ENCODE measurements at regions of chr1 and their contacts with region 1.

Region 1: DNA sequence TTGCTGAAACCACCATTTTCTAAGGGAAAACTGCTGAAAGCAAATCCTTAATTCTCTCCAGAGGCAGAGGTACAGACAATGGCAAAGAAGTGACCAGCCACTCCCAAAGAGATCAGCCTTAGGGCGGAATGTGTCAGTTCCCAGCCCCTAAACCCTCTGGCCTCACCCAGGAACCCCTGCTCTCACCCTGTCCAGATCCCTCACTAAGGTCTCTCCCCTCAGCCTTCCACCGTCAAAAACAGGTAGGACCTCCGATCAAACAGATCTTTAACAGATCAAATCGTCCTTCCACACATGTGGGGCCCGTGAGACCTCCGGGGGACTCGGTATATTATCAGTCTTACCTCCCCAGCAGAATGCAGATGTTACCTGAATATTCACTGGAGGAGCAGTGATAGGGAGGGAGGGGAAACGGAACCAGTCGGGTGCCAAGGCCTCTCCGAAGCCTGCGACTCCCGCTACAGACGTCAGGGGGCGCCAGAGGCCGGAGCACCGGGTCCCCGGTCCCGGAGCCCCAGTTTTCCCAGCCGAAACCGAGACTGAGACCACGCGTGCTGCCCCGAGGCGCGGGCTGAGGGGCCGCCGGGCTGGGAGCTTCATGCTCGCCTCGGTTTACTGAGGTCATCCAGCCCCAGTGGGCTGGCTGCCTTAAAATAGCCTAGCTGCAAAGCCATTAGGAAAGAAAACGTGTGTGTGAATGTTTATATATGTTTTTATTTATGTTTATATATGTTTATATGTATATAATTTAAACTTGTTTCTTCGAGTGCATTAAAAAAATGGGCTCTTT is 23.6 kb downstream of the GPA33 start:
- DNase-seq: peak; percentile 51
- H3K4me3 ChIP-seq: peak overlapping the region; percentile 28 to 40 (median 35)
- H3K27ac ChIP-seq: no peak overlapping the region
- H3K4me1 ChIP-seq: no peaks in the 10 kb centered on the region
- H3K27me3 ChIP-seq: no peaks in the 10 kb centered on the region
- CTCF ChIP-seq: peak; percentile 61 to 96

Region 2: DNA sequence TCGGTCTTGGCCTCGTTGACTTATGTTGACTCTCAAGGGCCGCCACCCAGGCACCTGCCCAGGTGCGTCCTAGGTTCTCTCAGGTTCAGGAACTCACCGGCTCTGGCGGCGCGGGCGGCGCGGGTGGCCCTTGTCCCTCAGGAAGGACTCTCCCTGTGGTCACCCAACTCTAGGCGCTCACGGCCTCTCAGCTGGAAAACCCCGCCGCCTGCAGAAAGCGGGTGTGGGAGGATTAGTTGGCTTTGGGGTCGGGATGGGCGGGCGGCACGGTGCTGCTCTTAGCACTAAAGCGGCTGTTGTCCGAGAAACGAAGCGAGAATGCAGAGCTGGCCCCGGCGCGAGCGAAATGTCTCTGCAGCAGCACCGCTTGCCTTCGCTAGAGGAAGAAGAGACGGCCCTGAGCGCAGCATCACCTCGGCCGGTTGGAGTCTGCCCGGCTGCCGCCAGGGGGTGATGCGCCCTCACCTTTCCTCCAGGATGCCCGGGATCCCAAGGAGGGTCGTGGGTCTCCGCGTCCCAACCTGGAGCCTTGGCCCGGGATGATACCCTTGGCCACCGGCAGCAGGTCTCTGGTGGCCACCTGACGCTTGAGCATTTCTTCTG is 182.4 kb before region 1 on chr1:
- CTCF ChIA-PET with region 1: no interaction called
- dilution Hi-C with region 1: loop called (anchors 25 kb)
- in situ Hi-C with region 1: loop called in 1 of 2 experiments (anchors 10 kb)
- intact Hi-C with region 1: no loop called
- DNase-seq: peak; percentile 31
- H3K4me3 ChIP-seq: peak overlapping the region in 1 of 3 experiments; percentile 24
- H3K27ac ChIP-seq: no peak overlapping the region
- H3K4me1 ChIP-seq: peaks cover 5% of the 10 kb centered on the region
- H3K27me3 ChIP-seq: no peaks in the 10 kb centered on the region
- CTCF ChIP-seq: peak; percentile 69 to 87

Region 3: DNA sequence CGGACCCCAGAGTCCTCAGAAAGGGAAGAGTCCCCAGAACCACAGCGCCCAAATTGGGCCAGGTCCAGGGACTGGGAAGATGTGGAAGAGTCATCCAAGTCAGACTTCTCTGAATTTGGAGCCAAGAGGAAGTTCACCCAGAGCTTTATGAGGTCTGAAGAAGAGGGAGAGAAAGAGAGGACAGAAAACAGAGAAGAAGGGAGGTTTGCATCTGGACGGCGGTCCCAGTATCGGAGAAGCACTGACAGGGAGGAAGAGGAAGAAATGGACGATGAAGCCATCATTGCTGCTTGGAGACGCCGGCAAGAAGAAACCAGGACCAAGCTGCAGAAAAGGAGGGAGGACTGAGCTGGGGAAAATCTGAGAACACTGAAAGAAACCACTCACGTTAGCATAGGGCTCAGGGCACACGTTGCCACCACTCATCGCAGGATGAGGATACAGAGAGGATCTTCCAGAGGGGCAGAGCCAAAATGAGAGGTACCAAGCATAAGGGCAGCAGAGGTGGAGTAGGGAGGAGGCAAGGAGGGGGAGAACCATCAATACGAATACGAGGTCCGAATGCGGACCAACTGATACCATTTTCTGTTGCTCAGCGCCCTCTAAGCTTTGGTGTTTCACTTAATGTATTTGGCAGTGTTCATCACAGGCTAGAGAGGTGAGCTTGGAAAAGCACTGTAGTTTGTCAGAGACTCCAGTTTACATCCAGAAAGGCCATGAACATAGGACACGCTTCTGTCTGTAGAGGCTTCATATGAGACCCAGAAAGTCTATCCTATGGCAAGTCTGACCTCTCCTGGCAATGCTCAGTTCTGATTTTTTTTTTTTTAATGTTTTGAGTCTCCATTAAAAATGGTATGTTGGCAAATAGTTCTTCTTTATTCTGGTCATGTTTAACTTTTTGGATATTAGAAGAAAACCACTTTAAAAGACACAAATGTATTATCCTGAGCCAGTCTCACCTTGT is 62.0 kb after region 1 on chr1:
- CTCF ChIA-PET with region 1: no interaction called
- dilution Hi-C with region 1: no loop called
- in situ Hi-C with region 1: loop called in 1 of 2 experiments (anchors 10 kb)
- intact Hi-C with region 1: loop called (anchors 1 kb)
- DNase-seq: no peak
- H3K4me3 ChIP-seq: no peak overlapping the region
- H3K27ac ChIP-seq: no peak overlapping the region
- H3K4me1 ChIP-seq: no peaks in the 10 kb centered on the region
- H3K27me3 ChIP-seq: no peaks in the 10 kb centered on the region
- CTCF ChIP-seq: peak; percentile 19 to 40

Region 4: DNA sequence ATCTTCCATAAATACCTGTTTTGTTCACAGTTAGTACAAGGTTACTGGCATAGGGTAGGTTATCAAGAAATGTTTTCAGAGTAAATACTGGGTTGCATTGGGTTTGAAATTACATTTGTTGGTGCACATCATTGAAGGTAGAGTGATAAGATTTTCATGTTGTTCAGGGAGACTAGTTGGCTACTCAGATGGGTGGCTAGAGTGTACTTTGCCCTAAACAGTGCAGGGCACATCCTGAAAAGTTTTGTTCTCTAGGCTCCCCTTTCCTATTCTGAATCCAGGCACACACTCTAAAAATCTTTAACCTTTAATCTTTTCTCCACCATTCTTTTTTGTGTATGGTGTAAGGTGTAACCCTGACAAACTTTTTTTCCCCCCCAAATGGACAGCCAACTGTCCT is 172.2 kb after region 1 on chr1:
- CTCF ChIA-PET with region 1: no interaction called
- dilution Hi-C with region 1: no loop called
- in situ Hi-C with region 1: no loop called
- intact Hi-C with region 1: no loop called
- DNase-seq: no peak
- H3K4me3 ChIP-seq: no peak overlapping the region
- H3K27ac ChIP-seq: no peak overlapping the region
- H3K4me1 ChIP-seq: peaks cover 4% of the 10 kb centered on the region
- H3K27me3 ChIP-seq: no peaks in the 10 kb centered on the region
- CTCF ChIP-seq: no peak

Region 5: GRCh38 chr1:167328816-167329483 is 262.4 kb after region 1 on chr1:
- CTCF ChIA-PET with region 1: no interaction called
- dilution Hi-C with region 1: loop called (anchors 10 kb)
- in situ Hi-C with region 1: no loop called
- intact Hi-C with region 1: no loop called
- DNase-seq: no peak
- H3K4me3 ChIP-seq: no peak overlapping the region
- H3K27ac ChIP-seq: no peak overlapping the region
- H3K4me1 ChIP-seq: no peaks in the 10 kb centered on the region
- H3K27me3 ChIP-seq: no peaks in the 10 kb centered on the region
- CTCF ChIP-seq: no peak

Region 6: GRCh38 chr1:167401260-167401873 is 334.8 kb after region 1 on chr1:
- CTCF ChIA-PET with region 1: no interaction called
- dilution Hi-C with region 1: no loop called
- in situ Hi-C with region 1: no loop called
- intact Hi-C with region 1: loop called (anchors 10 kb)
- DNase-seq: peak; percentile 57
- H3K4me3 ChIP-seq: no peak overlapping the region
- H3K27ac ChIP-seq: no peak overlapping the region
- H3K4me1 ChIP-seq: peaks cover 3% of the 10 kb centered on the region
- H3K27me3 ChIP-seq: no peaks in the 10 kb centered on the region
- CTCF ChIP-seq: peak; percentile 39 to 64

Region 7: GRCh38 chr1:167533851-167534300 is 467.3 kb after region 1 on chr1:
- CTCF ChIA-PET with region 1: no interaction called
- dilution Hi-C with region 1: loop called (anchors 25 kb)
- in situ Hi-C with region 1: loop called (anchors 10 to 25 kb)
- intact Hi-C with region 1: loop called (anchors 1 kb)
- DNase-seq: peak; percentile 68
- H3K4me3 ChIP-seq: no peak overlapping the region
- H3K27ac ChIP-seq: no peak overlapping the region
- H3K4me1 ChIP-seq: peaks cover 21% of the 10 kb centered on the region
- H3K27me3 ChIP-seq: no peaks in the 10 kb centered on the region
- CTCF ChIP-seq: peak; percentile 87 to 90

Measured in mammary epithelial cell (primary cell).